ENCODE measurements at regions of chrX and their contacts with region 1.

Region 1: DNA sequence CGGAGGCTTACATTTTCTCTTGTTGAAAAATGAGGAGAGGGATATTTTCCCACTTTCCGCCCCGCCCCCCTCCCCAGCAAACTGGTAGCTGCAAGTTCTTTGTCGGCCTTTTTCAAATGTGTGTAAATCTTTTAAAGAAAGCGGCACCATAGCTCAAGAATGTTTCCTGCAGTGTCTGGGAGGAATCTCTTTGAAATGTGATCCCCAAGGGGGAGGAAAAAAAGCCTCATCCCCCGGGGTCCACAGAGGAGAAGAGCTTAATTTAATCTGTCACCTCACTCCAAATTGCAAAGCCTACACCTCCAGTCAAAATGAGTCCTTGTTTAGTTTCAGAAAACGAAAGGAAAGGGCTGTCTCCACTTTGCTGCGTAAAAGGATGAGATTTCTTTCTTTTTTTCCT is 34.8 kb downstream of the ASMT start:
- DNase-seq: peak; percentile 41
- H3K4me3 ChIP-seq: no peak overlapping the region
- H3K27ac ChIP-seq: no peak overlapping the region
- H3K4me1 ChIP-seq: peaks cover 6% of the 10 kb centered on the region
- H3K27me3 ChIP-seq: no peaks in the 10 kb centered on the region
- CTCF ChIP-seq: no peak

Region 2: DNA sequence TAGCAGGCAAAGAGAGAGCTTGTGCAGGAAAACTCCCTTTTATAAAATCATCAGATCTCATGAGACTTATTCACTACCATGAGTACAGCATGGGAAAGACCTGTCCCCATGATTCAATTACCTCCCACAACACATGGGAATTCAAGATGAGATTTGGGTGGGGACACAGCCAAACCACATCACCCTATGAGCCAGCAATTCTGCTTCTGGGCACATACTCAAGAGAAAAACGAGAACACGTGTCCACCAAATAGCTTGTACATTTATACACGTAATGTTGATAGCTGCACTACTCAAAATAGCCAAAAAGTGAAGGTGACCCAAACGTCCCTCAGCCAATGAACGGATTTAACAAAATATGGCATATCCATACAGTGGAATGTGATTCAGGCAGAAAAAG is 945.6 kb after region 1 on chrX:
- CTCF ChIA-PET with region 1: no interaction called
- POLR2A ChIA-PET with region 1: no interaction called
- intact Hi-C with region 1: loop called (anchors 1 kb)
- DNase-seq: no peak
- H3K4me3 ChIP-seq: no peak overlapping the region
- H3K27ac ChIP-seq: no peak overlapping the region
- H3K4me1 ChIP-seq: peaks cover 5% of the 10 kb centered on the region
- H3K27me3 ChIP-seq: no peaks in the 10 kb centered on the region
- CTCF ChIP-seq: no peak

Region 3: GRCh38 chrX:2627272-2627867 is 977.7 kb after region 1 on chrX:
- CTCF ChIA-PET with region 1: no interaction called
- POLR2A ChIA-PET with region 1: no interaction called
- intact Hi-C with region 1: loop called (anchors 2 kb)
- DNase-seq: peak; percentile 74
- H3K4me3 ChIP-seq: no peak overlapping the region
- H3K27ac ChIP-seq: no peak overlapping the region
- H3K4me1 ChIP-seq: no peaks in the 10 kb centered on the region
- H3K27me3 ChIP-seq: no peaks in the 10 kb centered on the region
- CTCF ChIP-seq: peak; percentile 74

Measured in A673 (cell line).